Activated CD8-positive, alpha-beta memory T cell treated with anti-CD3 and anti-CD28 coated beads, Interleukin-2, amount 10 ng/mL, durations not matched to agents 7 days and 5 days (primary cell): ENCODE measurements at regions of chr17 and their contacts with region 1.

Region 1: GRCh38 chr17:40615295-40615988 is 32.2 kb downstream of the SMARCE1 start:
- DNase-seq: no peak
- ATAC-seq: no peak
- H3K4me3 Mint-ChIP-seq: no peak overlapping the region
- H3K27ac Mint-ChIP-seq: peak overlapping the region; percentile 60
- H3K4me1 Mint-ChIP-seq: peaks cover 66% of the 10 kb centered on the region
- H3K27me3 Mint-ChIP-seq: no peaks in the 10 kb centered on the region

Region 2: DNA sequence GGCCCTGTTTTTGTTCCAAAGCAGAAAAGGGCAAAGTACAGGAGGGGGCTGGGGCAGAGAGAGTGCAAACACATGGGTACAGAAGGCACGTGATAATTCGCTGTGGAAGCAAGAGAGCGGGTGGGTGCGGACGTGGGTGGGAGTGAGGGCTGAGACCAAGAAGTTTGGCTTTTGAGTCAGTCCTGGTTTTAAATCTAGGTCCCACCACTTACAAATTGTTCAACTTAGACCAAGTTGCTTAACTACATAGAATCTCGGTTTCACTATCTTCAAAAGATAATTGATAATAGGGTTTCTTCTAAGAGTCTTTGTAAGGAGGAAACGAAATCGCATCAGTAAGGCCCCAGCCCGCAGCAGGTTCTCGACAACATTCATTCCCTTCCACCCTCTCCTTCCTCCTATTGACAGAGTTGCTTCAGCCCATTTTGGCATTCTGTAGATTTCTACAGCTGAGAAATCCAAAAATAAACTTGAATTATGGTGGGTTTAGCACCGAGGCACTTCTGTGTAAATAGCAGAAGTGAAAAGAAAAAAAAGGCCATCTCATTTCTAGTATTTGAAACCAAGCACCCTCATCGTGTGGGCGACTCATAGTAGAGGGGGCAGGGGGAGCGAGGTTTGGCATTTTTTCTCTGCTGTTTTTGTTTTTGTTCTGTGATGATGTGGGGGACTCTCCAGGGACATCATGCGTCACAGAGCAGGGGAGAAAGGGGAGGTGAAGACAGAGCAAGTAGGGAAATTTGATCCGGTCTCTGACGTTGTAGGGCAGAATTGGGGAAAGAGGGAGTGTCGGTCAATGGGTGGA is 16.6 kb before region 1 on chr17:
- CTCF ChIA-PET with region 1: interaction called, 30 read pairs
- DNase-seq: peak; percentile 79
- ATAC-seq: peak; percentile 45
- H3K4me3 Mint-ChIP-seq: peak overlapping the region; percentile 49
- H3K27ac Mint-ChIP-seq: peak overlapping the region; percentile 95
- H3K4me1 Mint-ChIP-seq: peaks cover 80% of the 10 kb centered on the region
- H3K27me3 Mint-ChIP-seq: no peaks in the 10 kb centered on the region

Region 3: GRCh38 chr17:40647624-40648383 is 32.4 kb after region 1 on chr17 and contains the start of gene SMARCE1:
- CTCF ChIA-PET with region 1: interaction called, 30 read pairs
- DNase-seq: peak; percentile 77
- ATAC-seq: peak; percentile 79
- H3K4me3 Mint-ChIP-seq: peak within 1 kb of the TSS; percentile 95
- H3K27ac Mint-ChIP-seq: peak within 1 kb of the TSS; percentile 96
- H3K4me1 Mint-ChIP-seq: peaks cover 39% of the 10 kb centered on the region
- H3K27me3 Mint-ChIP-seq: no peaks in the 10 kb centered on the region
- total RNA-seq, gene SMARCE1: 90.7 to 110 TPM

Region 4: GRCh38 chr17:40664582-40665333 is 49.3 kb after region 1 on chr17 and contains the start of gene KRT222:
- CTCF ChIA-PET with region 1: no interaction called
- DNase-seq: no peak
- ATAC-seq: no peak
- H3K4me3 Mint-ChIP-seq: peak within 1 kb of the TSS; percentile 2
- H3K27ac Mint-ChIP-seq: no peak within 1 kb of the TSS
- H3K4me1 Mint-ChIP-seq: peaks cover 6% of the 10 kb centered on the region
- H3K27me3 Mint-ChIP-seq: peaks cover 44% of the 10 kb centered on the region
- total RNA-seq, gene KRT222: not detected